MCF 10A (cell line): ENCODE measurements at regions of chr2 and their contacts with region 1.

Region 1: DNA sequence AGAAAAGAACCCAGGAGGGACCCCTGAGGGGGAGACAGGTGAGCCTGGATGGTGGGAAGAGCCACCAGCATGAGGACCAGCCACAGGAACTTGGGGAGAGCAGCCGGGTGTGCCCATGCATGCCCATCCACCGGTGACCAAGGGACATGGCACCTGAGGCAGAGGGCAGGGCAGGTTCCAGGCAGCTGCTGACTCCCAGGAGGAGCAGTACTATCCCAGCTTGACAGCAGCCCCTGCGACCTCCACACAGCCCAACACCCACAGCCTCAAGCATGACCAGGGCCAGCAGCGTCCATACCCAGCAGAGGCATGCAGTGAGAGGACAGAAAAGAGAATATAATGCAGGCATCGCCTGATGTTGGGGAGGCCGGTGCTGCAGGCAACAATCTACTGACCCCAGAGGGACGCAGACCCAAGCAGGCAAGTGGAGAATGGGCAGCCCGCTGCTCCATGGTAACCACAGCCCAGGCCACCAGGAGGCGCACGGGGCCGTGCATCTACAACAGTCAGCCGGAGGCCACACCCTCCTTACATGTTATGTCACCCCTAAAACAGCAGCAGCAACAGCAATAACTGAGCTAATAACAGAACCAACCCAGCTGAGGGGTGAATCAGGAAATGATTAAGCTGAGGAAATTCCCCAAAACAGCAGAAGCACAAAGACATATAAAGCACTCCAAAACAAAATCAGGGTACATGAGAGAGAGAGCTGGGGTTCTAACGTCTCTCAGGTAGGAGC is 44.1 kb downstream of the ANKMY1 start:
- DNase-seq: peak; percentile 76
- H3K4me3 Mint-ChIP-seq: no peak overlapping the region
- H3K27ac Mint-ChIP-seq: peak overlapping the region; percentile 16
- H3K4me1 Mint-ChIP-seq: peaks cover 12% of the 10 kb centered on the region
- H3K27me3 Mint-ChIP-seq: no peaks in the 10 kb centered on the region
- CTCF ChIP-seq: peak; percentile 77

Region 2: DNA sequence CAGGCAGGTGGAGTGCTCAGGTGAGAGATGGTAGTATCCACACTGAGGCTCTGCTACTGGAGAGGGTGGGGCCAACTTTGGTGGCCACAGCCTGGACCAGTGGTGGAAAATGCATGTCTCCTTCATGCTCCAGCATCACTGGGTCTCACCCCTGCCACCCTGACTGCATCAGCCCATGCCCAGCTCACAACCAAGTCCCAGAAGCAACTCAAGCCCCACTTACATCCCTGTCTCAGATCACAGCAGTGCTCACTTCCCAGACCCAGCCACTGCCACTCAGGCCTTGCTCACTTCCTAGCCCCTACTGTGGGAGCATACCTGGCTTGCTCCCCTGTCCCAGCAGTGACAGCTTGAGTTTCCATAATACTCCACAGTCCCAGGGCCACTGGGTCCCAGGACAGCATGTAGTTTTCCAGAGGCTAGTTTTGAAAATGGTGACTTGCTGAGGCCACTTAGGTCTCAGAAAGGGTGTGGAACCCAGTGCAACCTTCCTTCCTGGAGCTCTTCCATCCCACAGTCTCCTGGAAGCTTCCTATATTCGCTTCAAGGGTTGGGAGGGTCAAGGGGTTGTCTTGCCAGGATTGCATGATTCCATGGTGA is 19.4 kb before region 1 on chr2:
- CTCF ChIA-PET with region 1: interaction called, 12 read pairs
- POLR2A ChIA-PET with region 1: no interaction called
- intact Hi-C with region 1: no loop called
- DNase-seq: no peak
- H3K4me3 Mint-ChIP-seq: no peak overlapping the region
- H3K27ac Mint-ChIP-seq: no peak overlapping the region
- H3K4me1 Mint-ChIP-seq: peaks cover 5% of the 10 kb centered on the region
- H3K27me3 Mint-ChIP-seq: no peaks in the 10 kb centered on the region
- CTCF ChIP-seq: no peak

Region 3: DNA sequence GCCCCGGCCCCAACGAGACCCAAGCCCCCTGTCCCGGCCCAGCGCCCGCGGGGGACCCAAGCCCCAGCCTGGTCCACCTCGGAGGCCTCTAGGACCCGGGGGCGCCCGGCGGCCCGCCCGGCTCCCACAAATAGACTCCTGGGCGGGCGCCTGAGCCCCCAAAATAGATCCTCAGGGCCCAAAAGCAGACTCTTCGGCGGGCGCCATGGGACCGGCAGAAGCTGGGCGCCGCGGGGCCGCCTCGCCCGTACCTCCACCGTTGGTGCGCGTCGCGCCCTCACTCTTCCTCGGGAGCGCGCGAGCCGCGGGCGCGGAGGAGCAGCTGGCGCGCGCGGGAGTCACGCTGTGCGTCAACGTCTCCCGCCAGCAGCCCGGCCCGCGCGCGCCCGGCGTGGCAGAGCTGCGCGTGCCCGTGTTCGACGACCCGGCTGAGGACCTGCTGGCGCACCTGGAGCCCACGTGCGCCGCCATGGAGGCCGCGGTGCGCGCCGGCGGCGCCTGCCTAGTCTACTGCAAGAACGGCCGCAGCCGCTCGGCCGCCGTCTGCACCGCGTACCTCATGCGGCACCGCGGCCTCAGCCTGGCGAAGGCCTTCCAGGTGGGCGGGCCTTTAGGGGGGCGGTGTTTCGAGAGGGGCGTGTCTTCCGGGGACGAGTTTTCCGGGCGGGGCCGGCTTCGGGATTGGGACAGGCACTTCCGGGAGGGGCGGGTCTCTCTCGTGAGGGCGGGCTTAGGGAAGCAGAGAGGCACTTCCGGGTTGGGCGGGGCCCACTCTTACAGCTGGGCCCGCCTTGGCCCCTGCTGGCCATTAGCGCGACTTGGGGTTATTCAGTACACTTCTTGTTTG is 47.0 kb after region 1 on chr2:
- CTCF ChIA-PET with region 1: interaction called, 16 read pairs
- POLR2A ChIA-PET with region 1: interaction called, 12 read pairs
- intact Hi-C with region 1: loop called (anchors 5 kb)
- DNase-seq: peak; percentile 98
- H3K4me3 Mint-ChIP-seq: peak overlapping the region; percentile 80
- H3K27ac Mint-ChIP-seq: peak overlapping the region; percentile 74
- H3K4me1 Mint-ChIP-seq: peaks cover 41% of the 10 kb centered on the region
- H3K27me3 Mint-ChIP-seq: no peaks in the 10 kb centered on the region
- CTCF ChIP-seq: no peak

Region 4: DNA sequence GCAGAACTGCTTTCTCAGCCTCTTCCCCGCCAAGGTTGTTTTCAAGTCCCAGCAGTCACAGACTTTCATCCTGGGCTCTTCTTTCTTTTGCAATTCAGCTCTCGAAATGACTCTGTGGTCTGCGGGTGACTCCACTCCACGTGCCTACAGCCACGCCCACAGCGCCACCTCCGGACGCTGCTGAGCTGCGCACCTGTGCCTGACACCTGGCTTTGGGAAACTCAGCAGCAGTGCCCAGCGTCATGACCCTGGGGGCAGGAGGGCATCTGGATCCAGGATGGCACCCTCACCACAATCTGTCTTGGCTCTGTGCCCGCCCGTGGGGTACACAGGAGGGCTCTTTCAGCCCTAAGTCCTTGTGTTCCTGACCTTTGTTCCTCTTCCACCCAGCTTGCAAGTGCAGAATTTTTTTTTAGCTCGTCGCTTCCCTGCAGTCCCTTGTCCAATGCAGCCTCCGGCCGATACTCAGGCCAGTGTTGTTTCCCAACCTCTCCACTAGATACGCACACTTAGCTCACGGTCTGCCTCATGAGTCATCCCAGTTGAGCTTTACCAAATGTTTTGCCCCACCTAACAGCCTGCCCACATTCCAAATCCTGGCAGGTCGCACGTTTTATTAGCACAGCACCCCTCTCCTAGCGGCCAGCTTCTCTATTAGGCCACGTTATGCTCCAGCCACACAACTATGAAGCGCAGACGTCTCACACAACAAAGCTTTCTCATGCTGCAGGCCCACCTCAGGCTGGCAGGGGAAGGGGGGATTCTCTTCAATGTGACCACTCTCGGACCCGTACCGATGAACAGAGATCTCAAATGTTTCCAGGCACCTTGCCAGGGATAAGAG is 66.3 kb after region 1 on chr2:
- CTCF ChIA-PET with region 1: interaction called, 19 read pairs
- POLR2A ChIA-PET with region 1: interaction called, 6 read pairs
- intact Hi-C with region 1: no loop called
- DNase-seq: peak; percentile 98
- H3K4me3 Mint-ChIP-seq: peak overlapping the region; percentile 73
- H3K27ac Mint-ChIP-seq: peak overlapping the region; percentile 99
- H3K4me1 Mint-ChIP-seq: peaks cover 46% of the 10 kb centered on the region
- H3K27me3 Mint-ChIP-seq: no peaks in the 10 kb centered on the region
- CTCF ChIP-seq: no peak

Region 5: GRCh38 chr2:240840435-240841080 is 326.8 kb after region 1 on chr2:
- CTCF ChIA-PET with region 1: interaction called, 63 read pairs
- POLR2A ChIA-PET with region 1: no interaction called
- intact Hi-C with region 1: loop called (anchors 1 kb)
- DNase-seq: peak; percentile 70
- H3K4me3 Mint-ChIP-seq: no peak overlapping the region
- H3K27ac Mint-ChIP-seq: no peak overlapping the region
- H3K4me1 Mint-ChIP-seq: no peaks in the 10 kb centered on the region
- H3K27me3 Mint-ChIP-seq: peaks cover 76% of the 10 kb centered on the region
- CTCF ChIP-seq: peak; percentile 53